ENCODE measurements at regions of chr3 and their contacts with region 1.

Region 1: DNA sequence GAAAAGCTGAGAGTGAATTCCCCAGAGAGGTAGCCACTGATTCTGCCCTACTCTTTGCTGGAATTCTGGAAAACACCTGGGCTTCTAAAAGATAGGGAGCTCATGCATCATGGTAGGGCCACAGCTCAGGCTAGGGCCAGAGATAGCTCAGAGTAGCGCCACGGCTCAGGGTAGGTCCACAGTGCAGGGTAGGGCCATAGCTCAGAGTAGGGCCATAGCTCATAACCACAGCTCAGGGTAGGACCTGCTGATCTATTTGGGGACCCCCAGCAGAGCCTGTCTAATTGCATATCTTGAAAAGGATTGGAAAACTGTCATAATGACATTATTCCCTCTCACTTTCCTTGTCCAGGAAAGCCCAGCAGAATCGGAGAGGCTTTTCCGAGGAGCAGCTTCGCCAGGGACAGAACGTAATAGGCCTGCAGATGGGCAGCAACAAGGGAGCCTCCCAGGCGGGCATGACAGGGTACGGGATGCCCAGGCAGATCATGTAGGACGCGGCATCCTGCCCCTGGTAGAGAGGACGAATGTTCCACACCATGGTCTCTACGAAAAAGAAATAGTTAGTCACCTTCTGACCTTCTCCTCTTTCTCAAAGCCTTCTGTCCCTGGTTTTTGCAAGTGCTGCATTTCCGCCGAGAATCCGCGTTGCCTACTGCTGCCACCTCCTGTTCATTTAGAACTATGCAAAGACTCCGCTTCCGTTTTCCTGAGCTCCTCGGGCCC is 14.5 kb downstream of the TAGLN3 start:
- DNase-seq: peak; percentile 70
- H3K4me3 ChIP-seq: no peak overlapping the region
- H3K27ac ChIP-seq: no peak overlapping the region
- H3K4me1 ChIP-seq: no peaks in the 10 kb centered on the region
- H3K27me3 ChIP-seq: no peaks in the 10 kb centered on the region
- CTCF ChIP-seq: peak; percentile 64 to 69
- POLR2A ChIP-seq: no peak

Region 2: GRCh38 chr3:111668912-111669488 is 344.2 kb before region 1 on chr3:
- CTCF ChIA-PET with region 1: interaction called, 11 read pairs
- POLR2A ChIA-PET with region 1: no interaction called
- dilution Hi-C with region 1: no loop called
- intact Hi-C with region 1: loop called (anchors 1 kb)
- DNase-seq: peak; percentile 63
- H3K4me3 ChIP-seq: no peak overlapping the region
- H3K27ac ChIP-seq: peak overlapping the region; percentile 29
- H3K4me1 ChIP-seq: peaks cover 31% of the 10 kb centered on the region
- H3K27me3 ChIP-seq: no peaks in the 10 kb centered on the region
- CTCF ChIP-seq: peak; percentile 61
- POLR2A ChIP-seq: no peak

Region 3: GRCh38 chr3:111895079-111895478 is 118.1 kb before region 1 on chr3:
- CTCF ChIA-PET with region 1: interaction called, 65 read pairs
- POLR2A ChIA-PET with region 1: no interaction called
- dilution Hi-C with region 1: no loop called
- intact Hi-C with region 1: loop called (anchors 1 kb)
- DNase-seq: peak; percentile 84
- H3K4me3 ChIP-seq: no peak overlapping the region
- H3K27ac ChIP-seq: no peak overlapping the region
- H3K4me1 ChIP-seq: peaks cover 9% of the 10 kb centered on the region
- H3K27me3 ChIP-seq: no peaks in the 10 kb centered on the region
- CTCF ChIP-seq: peak; percentile 55 to 57
- POLR2A ChIP-seq: no peak

Region 4: GRCh38 chr3:111989061-111989678 is 24.1 kb before region 1 on chr3:
- CTCF ChIA-PET with region 1: interaction called, 291 read pairs
- POLR2A ChIA-PET with region 1: interaction called, 3 read pairs
- dilution Hi-C with region 1: no loop called
- intact Hi-C with region 1: loop called (anchors 1 kb)
- DNase-seq: peak; percentile 72
- H3K4me3 ChIP-seq: no peak overlapping the region
- H3K27ac ChIP-seq: no peak overlapping the region
- H3K4me1 ChIP-seq: no peaks in the 10 kb centered on the region
- H3K27me3 ChIP-seq: no peaks in the 10 kb centered on the region
- CTCF ChIP-seq: peak; percentile 55 to 60
- POLR2A ChIP-seq: no peak

Region 5: DNA sequence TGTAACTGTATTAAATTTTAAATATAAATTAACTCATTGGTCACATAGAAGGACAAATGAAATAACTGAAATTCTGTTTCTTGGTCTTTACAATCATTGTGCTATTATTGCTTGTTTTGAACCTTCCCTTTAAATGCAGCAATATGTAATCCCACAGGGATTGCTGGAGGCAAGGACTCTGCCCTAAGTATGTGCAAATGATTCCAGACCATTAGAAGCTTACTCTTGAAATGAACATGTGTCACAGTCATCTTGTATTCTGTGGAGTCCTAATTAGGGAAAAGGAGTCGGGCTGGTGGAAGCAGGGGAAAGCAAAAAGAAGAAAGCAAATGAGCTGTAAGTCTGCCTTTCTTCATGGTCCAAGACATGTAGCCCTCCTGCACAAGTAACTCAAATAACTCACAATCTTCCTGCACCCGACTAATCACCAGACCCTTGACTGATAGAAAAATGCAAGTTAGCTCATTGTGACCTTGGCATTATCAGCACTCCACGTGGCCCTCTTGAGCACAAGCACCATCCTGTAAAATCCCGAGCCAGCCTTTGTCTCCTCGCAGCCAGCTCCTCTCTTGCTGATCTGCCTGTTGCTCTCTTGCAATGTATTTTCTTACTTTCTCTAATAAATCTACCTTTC is 19.0 kb after region 1 on chr3:
- CTCF ChIA-PET with region 1: interaction called, 13 read pairs
- POLR2A ChIA-PET with region 1: no interaction called
- dilution Hi-C with region 1: no loop called
- intact Hi-C with region 1: no loop called
- DNase-seq: no peak
- H3K4me3 ChIP-seq: no peak overlapping the region
- H3K27ac ChIP-seq: no peak overlapping the region
- H3K4me1 ChIP-seq: no peaks in the 10 kb centered on the region
- H3K27me3 ChIP-seq: peaks cover 0 to 2% of the 10 kb centered on the region in 2 experiments
- CTCF ChIP-seq: no peak
- POLR2A ChIP-seq: no peak

Region 6: GRCh38 chr3:112379020-112379690 is 365.9 kb after region 1 on chr3:
- CTCF ChIA-PET with region 1: no interaction called
- POLR2A ChIA-PET with region 1: no interaction called
- dilution Hi-C with region 1: no loop called
- intact Hi-C with region 1: no loop called
- DNase-seq: no peak
- H3K4me3 ChIP-seq: no peak overlapping the region
- H3K27ac ChIP-seq: no peak overlapping the region
- H3K4me1 ChIP-seq: peaks cover 20% of the 10 kb centered on the region
- H3K27me3 ChIP-seq: no peaks in the 10 kb centered on the region
- CTCF ChIP-seq: no peak
- POLR2A ChIP-seq: no peak

Region 7: GRCh38 chr3:112429960-112430359 is 416.7 kb after region 1 on chr3:
- CTCF ChIA-PET with region 1: no interaction called
- POLR2A ChIA-PET with region 1: no interaction called
- dilution Hi-C with region 1: no loop called
- intact Hi-C with region 1: no loop called
- DNase-seq: no peak
- H3K4me3 ChIP-seq: no peak overlapping the region
- H3K27ac ChIP-seq: no peak overlapping the region
- H3K4me1 ChIP-seq: no peaks in the 10 kb centered on the region
- H3K27me3 ChIP-seq: no peaks in the 10 kb centered on the region
- CTCF ChIP-seq: no peak
- POLR2A ChIP-seq: no peak

Region 8: DNA sequence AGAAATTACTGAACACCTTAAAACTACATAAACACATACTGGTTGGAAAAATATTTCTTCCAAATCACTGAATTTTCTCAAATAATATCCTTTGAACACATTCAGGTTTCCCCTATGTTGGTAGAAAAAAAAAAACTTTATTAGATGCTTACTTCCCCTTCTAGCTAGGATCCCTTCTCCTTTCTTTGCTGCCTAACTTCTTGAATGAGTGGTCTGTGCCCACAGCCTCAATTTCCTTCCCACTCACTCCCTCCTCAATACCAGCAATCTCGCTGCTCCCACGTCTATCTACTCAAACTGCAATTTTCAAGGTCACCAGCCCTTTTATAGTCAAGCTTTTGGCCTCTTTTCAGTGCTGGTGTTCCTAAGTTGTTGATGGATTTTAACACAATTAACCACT is 953.4 kb after region 1 on chr3:
- CTCF ChIA-PET with region 1: no interaction called
- POLR2A ChIA-PET with region 1: no interaction called
- dilution Hi-C with region 1: no loop called
- intact Hi-C with region 1: no loop called
- DNase-seq: no peak
- H3K4me3 ChIP-seq: no peak overlapping the region
- H3K27ac ChIP-seq: no peak overlapping the region
- H3K4me1 ChIP-seq: no peaks in the 10 kb centered on the region
- H3K27me3 ChIP-seq: peaks cover 11 to 14% of the 10 kb centered on the region in 2 experiments
- CTCF ChIP-seq: no peak
- POLR2A ChIP-seq: no peak

Measured in endothelial cell of umbilical vein (primary cell).